OCI-LY7 (cell line): ENCODE measurements at regions of chr2 and their contacts with region 1.

Region 1: DNA sequence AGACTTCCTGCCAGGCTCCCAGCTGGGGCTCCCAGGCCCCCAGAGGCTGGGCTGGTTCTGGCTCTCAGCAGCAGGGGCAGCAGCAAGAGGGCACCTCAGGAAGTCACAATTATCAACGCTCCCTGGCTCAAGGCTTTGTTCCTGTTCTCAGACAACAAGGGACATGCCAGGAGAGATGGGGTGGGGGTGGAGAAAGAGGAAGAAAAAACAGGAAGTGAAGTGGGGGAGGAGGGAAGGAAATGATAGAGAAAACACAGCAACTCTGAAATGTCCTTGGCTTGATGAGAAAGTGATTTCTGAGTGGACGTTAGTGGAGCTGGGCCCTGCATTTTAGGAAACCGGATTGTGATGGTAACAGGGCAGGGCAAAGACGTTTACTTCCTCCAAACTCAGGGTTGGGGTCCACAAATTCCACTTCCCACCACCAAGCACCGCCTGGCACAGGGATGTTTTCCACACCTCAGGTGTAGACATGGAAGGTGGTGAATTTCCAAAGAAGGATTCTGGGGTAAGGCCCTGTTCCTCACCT is 40.4 kb downstream of the CYRIA start:
- DNase-seq: peak; percentile 83
- H3K4me3 ChIP-seq: peak overlapping the region; percentile 66
- H3K27ac ChIP-seq: peak overlapping the region; percentile 97
- H3K4me1 ChIP-seq: peaks cover 93% of the 10 kb centered on the region
- CTCF ChIP-seq: 0 out of 2 replicates have a peak, but pooled peaks have one; percentile 23

Region 2: DNA sequence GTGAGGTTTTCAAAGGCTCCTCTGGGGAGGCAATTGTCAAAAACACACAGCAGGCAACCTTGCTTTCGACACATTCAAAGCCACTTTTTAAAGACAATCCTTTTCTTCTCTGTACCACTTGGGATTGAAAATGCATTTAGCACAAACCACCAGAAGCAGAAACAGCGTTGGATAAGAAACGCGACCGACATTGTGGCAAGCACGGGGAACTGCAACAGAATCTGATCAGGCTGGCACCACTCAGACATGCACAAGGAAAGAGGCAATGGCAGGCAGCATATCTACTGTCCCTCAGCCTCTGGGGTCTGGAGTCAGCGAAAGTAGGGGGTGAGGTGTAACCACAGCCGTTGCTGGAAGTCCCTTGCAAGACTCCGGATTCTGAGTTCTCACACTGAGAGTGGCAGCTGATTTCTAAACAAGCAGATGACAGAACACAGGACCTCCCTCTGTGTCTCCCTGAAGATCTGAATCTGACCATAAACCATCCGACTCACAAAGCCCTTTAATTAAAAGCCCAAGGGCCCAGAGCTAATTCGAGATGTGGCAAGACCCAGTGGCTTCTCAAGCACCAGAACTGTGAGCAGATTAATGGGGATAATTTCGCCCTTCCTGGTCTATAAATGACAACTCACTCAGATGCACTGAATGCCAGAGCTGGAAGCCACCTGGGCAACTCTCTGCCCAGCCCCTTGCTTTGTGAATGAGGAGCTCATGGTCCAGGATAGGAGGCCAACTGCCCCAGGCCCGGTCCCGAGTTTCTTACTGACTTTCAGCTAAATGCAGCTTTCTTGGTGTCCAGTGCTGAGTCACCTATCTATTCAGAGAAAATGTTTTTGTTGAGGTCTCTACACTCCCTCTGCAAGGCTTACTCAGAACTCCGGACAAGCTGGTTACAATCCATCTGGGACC is 10.8 kb after region 1 on chr2:
- CTCF ChIA-PET with region 1: no interaction called
- POLR2A ChIA-PET with region 1: interaction called, 24 read pairs
- intact Hi-C with region 1: no loop called
- DNase-seq: peak; percentile 47
- H3K4me3 ChIP-seq: no peak overlapping the region
- H3K27ac ChIP-seq: no peak overlapping the region
- H3K4me1 ChIP-seq: peaks cover 54% of the 10 kb centered on the region
- CTCF ChIP-seq: peak; percentile 47

Region 3: GRCh38 chr2:16665748-16666448 is 40.6 kb after region 1 on chr2 and contains the start of gene CYRIA:
- CTCF ChIA-PET with region 1: interaction called, 149 read pairs
- POLR2A ChIA-PET with region 1: interaction called, 414 read pairs
- intact Hi-C with region 1: loop called (anchors 1 kb)
- DNase-seq: peak; percentile 73
- H3K4me3 ChIP-seq: peak within 1 kb of the TSS; percentile 78
- H3K27ac ChIP-seq: peak within 1 kb of the TSS; percentile 15
- H3K4me1 ChIP-seq: peaks cover 58% of the 10 kb centered on the region
- CTCF ChIP-seq: no peak
- total RNA-seq, gene CYRIA: 2.6 and 5.0 TPM in 2 replicates

Region 4: DNA sequence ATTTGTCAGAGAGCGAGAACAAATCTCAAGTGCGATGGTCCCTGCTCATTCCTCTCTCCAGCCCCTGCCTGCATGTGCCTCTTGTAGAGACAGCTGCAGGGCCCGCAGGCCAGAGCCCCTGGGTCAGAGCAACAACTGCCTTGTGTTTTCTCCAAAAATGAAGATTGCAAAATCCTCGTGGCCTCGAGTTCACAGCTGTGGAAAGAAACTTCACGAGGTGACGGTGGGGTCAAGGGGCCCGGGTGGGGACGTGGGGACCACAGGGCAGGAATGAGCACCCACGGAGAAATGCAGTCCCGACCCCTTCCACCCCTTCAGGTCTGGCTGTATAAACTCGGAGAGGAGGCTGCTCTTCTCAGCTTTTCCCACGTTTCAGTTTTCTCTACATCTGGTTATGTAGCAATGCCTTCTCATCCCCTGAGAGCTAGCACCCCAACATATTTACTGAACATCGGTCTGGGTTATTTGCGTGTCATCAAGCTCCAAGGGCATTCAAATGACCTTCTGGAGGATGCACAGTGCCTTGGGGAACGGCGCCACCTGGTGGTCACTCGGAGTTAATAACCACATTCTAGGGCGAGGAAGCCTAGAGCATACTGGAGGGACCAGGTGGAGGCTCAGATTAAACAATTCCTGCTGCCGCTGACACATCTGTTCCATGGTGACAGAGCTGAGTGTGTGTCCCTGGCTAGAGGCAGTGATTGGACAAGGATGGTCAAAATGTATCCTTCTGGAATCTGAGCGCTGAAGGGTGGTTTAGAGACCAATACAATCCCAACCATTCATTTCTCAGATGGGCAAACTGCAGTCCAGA is 131.8 kb after region 1 on chr2:
- CTCF ChIA-PET with region 1: interaction called, 7 read pairs
- POLR2A ChIA-PET with region 1: interaction called, 17 read pairs
- intact Hi-C with region 1: no loop called
- DNase-seq: peak; percentile 79
- H3K4me3 ChIP-seq: no peak overlapping the region
- H3K27ac ChIP-seq: no peak overlapping the region
- H3K4me1 ChIP-seq: peaks cover 4% of the 10 kb centered on the region
- CTCF ChIP-seq: peak; percentile 96

Region 5: GRCh38 chr2:17518212-17519154 is 893.2 kb after region 1 on chr2 and contains the start of gene RAD51AP2:
- CTCF ChIA-PET with region 1: no interaction called
- POLR2A ChIA-PET with region 1: no interaction called
- intact Hi-C with region 1: loop called (anchors 5 kb)
- DNase-seq: peak; percentile 80
- H3K4me3 ChIP-seq: peak within 1 kb of the TSS; percentile 66
- H3K27ac ChIP-seq: no peak within 1 kb of the TSS
- H3K4me1 ChIP-seq: peaks cover 33% of the 10 kb centered on the region
- CTCF ChIP-seq: no peak
- total RNA-seq, gene RAD51AP2: 0.05 and 0.35 TPM in 2 replicates

Region 6: DNA sequence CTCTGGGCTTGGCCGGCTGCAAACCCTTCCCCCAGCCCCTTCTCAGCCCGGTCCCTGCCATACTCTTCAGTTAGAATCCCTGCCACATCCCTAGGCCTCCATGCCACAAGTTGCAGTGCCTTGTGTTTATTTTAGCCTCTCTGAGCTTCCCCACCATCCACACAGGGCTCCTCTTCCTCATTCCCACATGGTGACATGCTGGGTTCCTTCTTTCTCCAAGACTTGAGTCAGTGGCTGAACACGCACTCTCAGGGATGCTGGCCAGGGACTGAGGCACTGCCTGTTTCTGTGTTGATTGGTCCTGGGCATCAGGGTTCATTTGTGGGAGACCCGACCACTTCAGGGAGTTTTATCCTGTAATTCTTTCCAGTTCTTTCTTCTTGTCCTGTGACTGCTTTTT is 1309.5 kb after region 1 on chr2:
- CTCF ChIA-PET with region 1: no interaction called
- POLR2A ChIA-PET with region 1: no interaction called
- intact Hi-C with region 1: no loop called
- DNase-seq: no peak
- H3K4me3 ChIP-seq: no peak overlapping the region
- H3K27ac ChIP-seq: no peak overlapping the region
- H3K4me1 ChIP-seq: no peaks in the 10 kb centered on the region
- CTCF ChIP-seq: no peak